IMR-90 (cell line): ENCODE measurements at regions of chrX and their contacts with region 1.

Region 1: GRCh38 chrX:49884290-49884862 is 5.1 kb downstream of the USP27X start:
- DNase-seq: peak; percentile 35
- ATAC-seq: peak; percentile 57
- H3K4me3 ChIP-seq: no peak overlapping the region
- H3K27ac ChIP-seq: no peak overlapping the region
- H3K4me1 ChIP-seq: 0 out of 2 replicates have a peak, but pooled peaks cover 1% of the 10 kb centered on the region
- H3K27me3 ChIP-seq: peaks cover 4% of the 10 kb centered on the region
- CTCF ChIP-seq: peak; percentile 64
- POLR2A ChIP-seq: no peak
- RAD21 ChIP-seq: peak; percentile 46

Region 2: GRCh38 chrX:50204364-50204899 is 320.1 kb after region 1 on chrX and contains the start of gene CCNB3:
- CTCF ChIA-PET with region 1: no interaction called
- POLR2A ChIA-PET with region 1: no interaction called
- dilution Hi-C with region 1: no loop called
- in situ Hi-C with region 1: no loop called
- intact Hi-C with region 1: loop called (anchors 1 kb)
- DNase-seq: peak; percentile 56
- ATAC-seq: peak; percentile 85
- H3K4me3 ChIP-seq: 0 out of 2 replicates have a peak within 1 kb of the TSS, but pooled peaks have one; percentile 13
- H3K27ac ChIP-seq: no peak within 1 kb of the TSS
- H3K4me1 ChIP-seq: no peaks in the 10 kb centered on the region
- H3K27me3 ChIP-seq: no peaks in the 10 kb centered on the region; the same call in none of the 2 replicates
- CTCF ChIP-seq: peak; percentile 82
- POLR2A ChIP-seq: no peak
- RAD21 ChIP-seq: peak; percentile 50
- total RNA-seq, gene CCNB3: 0.18 and 0.28 TPM in 2 replicates